Activated naive CD4-positive, alpha-beta T cell treated with anti-CD3 and anti-CD28 coated beads for 36 hours (primary cell): ENCODE measurements at regions of chr5 and their contacts with region 1.

Region 1: DNA sequence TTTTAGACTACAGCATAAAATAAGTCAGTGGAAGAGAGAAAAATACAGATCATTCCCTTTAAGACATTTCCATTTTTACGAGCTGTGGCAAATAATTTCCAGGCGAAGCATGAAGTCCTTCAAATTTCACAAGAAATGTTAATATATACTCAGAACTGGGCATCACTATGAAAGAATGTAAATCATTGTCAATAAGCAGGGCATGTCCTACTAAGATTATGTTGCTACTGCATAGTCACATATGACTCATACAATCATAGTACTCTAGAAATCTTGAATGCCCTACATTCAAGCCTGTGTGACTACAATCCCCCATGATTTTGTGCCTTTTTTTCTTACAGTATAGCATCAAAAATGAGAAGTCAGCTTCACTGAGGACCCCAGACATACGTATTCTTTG is 485.2 kb upstream of the FTMT start:
- DNase-seq: no peak
- H3K4me3 Mint-ChIP-seq: no peak overlapping the region
- H3K27ac Mint-ChIP-seq: no peak overlapping the region
- H3K4me1 Mint-ChIP-seq: no peaks in the 10 kb centered on the region
- H3K27me3 Mint-ChIP-seq: no peaks in the 10 kb centered on the region

Region 2: DNA sequence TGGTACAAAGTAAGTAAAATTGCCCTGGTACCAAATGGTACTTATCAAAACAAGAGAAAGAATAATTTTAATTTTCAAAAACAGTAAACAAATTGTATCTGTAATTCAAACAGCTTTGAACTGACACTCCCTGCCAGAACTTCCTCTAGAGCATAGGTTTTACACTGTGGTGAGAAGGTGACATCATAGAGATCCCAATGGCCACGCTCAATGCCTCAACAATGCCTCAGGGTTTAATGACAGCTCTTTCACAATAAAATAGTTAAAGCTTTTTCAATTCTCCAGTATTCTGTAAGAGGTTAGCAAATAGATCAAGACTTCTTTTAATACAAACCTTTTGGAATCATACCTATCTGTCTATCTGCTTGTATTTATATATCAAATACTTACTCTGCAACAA is 465.3 kb before region 1 on chr5:
- CTCF ChIA-PET with region 1: no interaction called
- intact Hi-C with region 1: no loop called
- DNase-seq: no peak
- H3K4me3 Mint-ChIP-seq: no peak overlapping the region
- H3K27ac Mint-ChIP-seq: no peak overlapping the region
- H3K4me1 Mint-ChIP-seq: no peaks in the 10 kb centered on the region
- H3K27me3 Mint-ChIP-seq: no peaks in the 10 kb centered on the region

Region 3: DNA sequence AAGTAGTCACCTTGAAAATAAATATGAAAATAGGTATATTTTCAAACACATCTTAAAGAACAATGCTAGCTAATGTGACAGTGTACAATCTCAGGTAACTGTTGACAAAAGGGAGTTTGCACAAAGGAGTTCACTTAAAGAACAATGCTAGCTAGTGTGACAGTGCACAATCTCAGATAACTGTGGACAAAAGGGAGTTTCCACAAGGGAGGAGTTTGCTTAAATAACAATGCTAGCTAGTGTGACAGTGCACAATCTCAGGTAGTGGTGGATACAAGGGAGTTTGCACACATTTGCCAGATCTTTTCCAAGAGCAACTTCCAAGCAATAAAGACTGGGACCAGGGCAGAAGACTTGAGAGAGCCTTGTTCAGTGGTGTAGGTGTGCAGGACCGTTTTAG is 42.3 kb after region 1 on chr5:
- CTCF ChIA-PET with region 1: no interaction called
- intact Hi-C with region 1: loop called (anchors 2 kb)
- DNase-seq: no peak
- H3K4me3 Mint-ChIP-seq: no peak overlapping the region
- H3K27ac Mint-ChIP-seq: no peak overlapping the region
- H3K4me1 Mint-ChIP-seq: no peaks in the 10 kb centered on the region
- H3K27me3 Mint-ChIP-seq: no peaks in the 10 kb centered on the region